IMR-90 (cell line): ENCODE measurements at regions of chr3 and their contacts with region 1.

Region 1: GRCh38 chr3:170429050-170429449 is 10.4 kb downstream of the CLDN11 start:
- DNase-seq: no peak
- ATAC-seq: no peak
- H3K4me3 ChIP-seq: no peak overlapping the region
- H3K27ac ChIP-seq: no peak overlapping the region
- H3K4me1 ChIP-seq: peaks cover 7% of the 10 kb centered on the region; the same call in 1 of the 2 replicates
- H3K27me3 ChIP-seq: no peaks in the 10 kb centered on the region
- CTCF ChIP-seq: no peak
- POLR2A ChIP-seq: no peak
- RAD21 ChIP-seq: no peak

Region 2: DNA sequence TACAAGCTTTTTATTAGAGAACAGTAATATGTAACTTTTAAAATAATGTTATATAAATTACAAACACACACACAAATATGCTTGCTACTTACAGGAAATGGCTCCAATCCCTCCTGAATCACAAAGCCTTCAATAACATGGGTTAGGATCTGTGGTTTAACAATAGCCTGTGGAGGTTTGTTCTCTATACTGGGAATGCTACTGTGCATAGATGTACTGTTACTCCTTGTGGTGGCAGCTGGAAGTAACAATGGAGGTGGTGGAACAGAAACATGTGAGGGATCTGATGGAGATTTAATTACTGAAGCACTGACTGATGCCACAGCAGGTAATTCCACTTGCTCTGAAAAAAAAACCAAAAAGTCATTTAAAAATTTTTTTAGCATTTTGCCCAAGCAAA is 311.9 kb before region 1 on chr3:
- CTCF ChIA-PET with region 1: no interaction called
- POLR2A ChIA-PET with region 1: no interaction called
- dilution Hi-C with region 1: no loop called
- in situ Hi-C with region 1: no loop called
- intact Hi-C with region 1: no loop called
- DNase-seq: no peak
- ATAC-seq: no peak
- H3K4me3 ChIP-seq: no peak overlapping the region
- H3K27ac ChIP-seq: no peak overlapping the region
- H3K4me1 ChIP-seq: no peaks in the 10 kb centered on the region
- H3K27me3 ChIP-seq: no peaks in the 10 kb centered on the region
- CTCF ChIP-seq: 0 out of 2 replicates have a peak, but pooled peaks have one; percentile 9
- POLR2A ChIP-seq: no peak
- RAD21 ChIP-seq: no peak

Region 3: DNA sequence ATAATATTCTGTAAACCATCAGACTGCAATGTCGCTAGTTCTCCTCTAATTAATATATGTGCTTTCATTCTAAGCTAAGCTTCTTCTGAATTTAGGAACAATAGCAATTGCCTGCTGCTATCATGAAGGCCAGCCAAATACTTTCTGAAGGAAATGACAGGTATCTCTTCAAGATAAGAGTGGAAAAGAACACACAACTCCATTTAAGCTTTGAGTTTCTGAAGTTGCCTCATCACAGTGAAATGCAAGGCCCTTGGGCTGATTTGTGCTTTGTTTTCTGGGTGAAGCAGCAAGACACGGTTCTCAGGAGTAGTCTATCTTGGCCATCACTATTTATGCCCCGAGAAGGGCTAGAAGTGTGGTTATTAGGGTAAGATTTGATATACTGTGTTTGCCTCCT is 150.6 kb after region 1 on chr3:
- CTCF ChIA-PET with region 1: no interaction called
- POLR2A ChIA-PET with region 1: no interaction called
- dilution Hi-C with region 1: no loop called
- in situ Hi-C with region 1: no loop called
- intact Hi-C with region 1: no loop called
- DNase-seq: no peak
- ATAC-seq: no peak
- H3K4me3 ChIP-seq: no peak overlapping the region
- H3K27ac ChIP-seq: no peak overlapping the region
- H3K4me1 ChIP-seq: no peaks in the 10 kb centered on the region
- H3K27me3 ChIP-seq: peaks cover under 1% of the 10 kb centered on the region
- CTCF ChIP-seq: no peak
- POLR2A ChIP-seq: no peak
- RAD21 ChIP-seq: no peak

Region 4: DNA sequence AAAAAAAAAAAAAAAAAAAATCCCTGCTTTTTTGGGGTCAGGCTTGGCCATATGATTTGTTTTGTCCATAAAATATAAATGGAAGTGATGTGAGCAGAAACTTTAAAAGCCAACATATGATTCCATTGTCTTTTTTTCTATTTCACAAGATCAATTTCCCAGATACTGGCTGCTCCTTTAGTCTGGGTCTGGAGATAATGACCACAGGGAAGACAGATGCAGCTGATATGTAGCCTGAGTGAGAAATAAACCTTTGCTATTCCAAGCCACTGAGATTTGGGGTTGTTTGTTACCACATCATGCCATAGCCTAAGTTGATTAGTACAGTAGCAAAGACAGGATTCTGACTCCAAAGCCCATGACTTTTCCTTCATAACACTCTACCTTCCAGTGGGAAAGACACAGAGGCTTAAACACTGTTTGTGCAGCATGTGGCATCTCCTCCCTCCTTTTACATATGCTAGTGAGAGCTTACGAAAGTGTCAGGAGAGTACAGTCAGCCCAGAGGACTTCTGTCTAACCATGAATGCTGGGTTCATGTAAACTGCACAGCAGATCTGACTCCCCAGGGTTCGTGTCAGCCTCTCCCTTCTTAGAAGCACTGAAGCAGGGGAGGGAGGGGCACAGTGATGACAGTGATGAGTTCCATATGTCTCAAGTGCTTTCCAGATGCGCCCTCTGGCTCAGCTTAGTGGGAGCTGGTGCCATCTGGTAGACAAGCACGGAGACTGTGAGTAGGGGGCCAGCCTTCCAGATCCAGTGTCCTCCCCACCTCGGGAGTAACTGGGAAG is 193.5 kb after region 1 on chr3:
- CTCF ChIA-PET with region 1: no interaction called
- POLR2A ChIA-PET with region 1: no interaction called
- dilution Hi-C with region 1: no loop called
- in situ Hi-C with region 1: no loop called
- intact Hi-C with region 1: loop called (anchors 5 kb)
- DNase-seq: peak; percentile 99
- ATAC-seq: peak; percentile 99
- H3K4me3 ChIP-seq: no peak overlapping the region
- H3K27ac ChIP-seq: peak overlapping the region; percentile 71
- H3K4me1 ChIP-seq: peaks cover 10% of the 10 kb centered on the region; the same call in 1 of the 2 replicates
- H3K27me3 ChIP-seq: no peaks in the 10 kb centered on the region
- CTCF ChIP-seq: 0 out of 2 replicates have a peak, but pooled peaks have one; percentile 15
- POLR2A ChIP-seq: no peak
- RAD21 ChIP-seq: no peak; the same call in 1 of the 2 replicates